Activated B cell treated with CpG ODN at 0.5 μM for 24 hours (primary cell): ENCODE measurements at regions of chr6 and their contacts with region 1.

Region 1: DNA sequence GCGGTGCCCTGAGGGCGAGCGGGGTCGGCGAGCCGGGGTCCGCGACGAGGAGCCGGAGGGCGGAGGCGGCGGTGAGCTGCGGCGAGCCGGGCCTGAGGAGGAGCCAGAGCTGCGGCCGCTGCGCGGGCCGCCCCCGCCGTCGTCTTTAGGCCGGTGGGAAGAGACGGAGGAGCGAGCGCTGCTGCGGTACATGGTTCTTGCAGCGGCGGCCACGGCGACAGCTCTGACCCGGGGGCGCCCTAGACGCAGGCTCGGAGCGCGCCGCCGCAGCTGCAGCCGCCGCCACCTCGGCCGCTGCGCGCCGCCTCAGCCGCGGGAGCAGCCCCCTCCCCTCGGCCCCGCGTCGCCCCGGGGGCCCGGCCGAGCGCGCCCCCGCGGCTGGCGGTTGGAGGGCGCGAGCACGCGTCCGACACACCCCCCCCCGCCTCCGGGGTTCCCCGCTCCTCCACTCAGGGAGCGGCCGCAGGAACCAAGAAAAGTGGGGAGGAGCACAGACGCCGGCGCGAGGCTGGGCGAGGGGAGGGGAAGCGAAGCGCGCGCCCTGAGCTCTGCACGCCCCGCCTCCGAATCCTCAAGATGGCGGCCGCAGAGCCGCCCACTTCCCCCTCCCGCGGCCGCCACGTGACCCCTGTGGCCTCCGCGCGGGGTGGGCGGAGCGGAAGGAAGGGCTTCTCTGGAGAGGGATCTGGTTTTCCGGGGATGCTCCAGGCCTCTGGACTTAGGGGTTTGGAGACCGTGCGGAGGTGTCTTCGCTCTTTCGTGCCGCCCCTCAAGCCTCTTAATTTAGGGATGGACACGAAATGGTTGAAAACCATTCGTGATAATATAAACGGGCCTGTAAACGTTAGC is at the start of gene ZNF318:
- DNase-seq: peak; percentile 92
- ATAC-seq: peak; percentile 90
- H3K4me3 Mint-ChIP-seq: peak within 1 kb of the TSS; percentile 95
- H3K27ac Mint-ChIP-seq: peak within 1 kb of the TSS; percentile 94
- H3K4me1 Mint-ChIP-seq: peaks cover 79% of the 10 kb centered on the region
- H3K27me3 Mint-ChIP-seq: no peaks in the 10 kb centered on the region
- CTCF ChIP-seq: no peak
- total RNA-seq, gene ZNF318: 135 and 159 TPM in 2 replicates

Region 2: GRCh38 chr6:42984001-42984923 is 385.1 kb before region 1 on chr6 and contains the start of gene PPP2R5D:
- CTCF ChIA-PET with region 1: no interaction called
- POLR2A ChIA-PET with region 1: interaction called, 3 read pairs
- intact Hi-C with region 1: loop called (anchors 2 kb)
- DNase-seq: peak; percentile 88
- ATAC-seq: peak; percentile 95
- H3K4me3 Mint-ChIP-seq: peak within 1 kb of the TSS; percentile 85
- H3K27ac Mint-ChIP-seq: peak within 1 kb of the TSS; percentile 88
- H3K4me1 Mint-ChIP-seq: peaks cover 44% of the 10 kb centered on the region
- H3K27me3 Mint-ChIP-seq: no peaks in the 10 kb centered on the region
- CTCF ChIP-seq: no peak
- total RNA-seq, gene PPP2R5D: 26.7 and 26.8 TPM in 2 replicates

Region 3: GRCh38 chr6:43328528-43328927 is 40.9 kb before region 1 on chr6:
- CTCF ChIA-PET with region 1: interaction called, 4 read pairs
- POLR2A ChIA-PET with region 1: no interaction called
- intact Hi-C with region 1: loop called (anchors 2 kb)
- DNase-seq: no peak
- ATAC-seq: no peak
- H3K4me3 Mint-ChIP-seq: no peak overlapping the region
- H3K27ac Mint-ChIP-seq: peak overlapping the region; percentile 31
- H3K4me1 Mint-ChIP-seq: peaks cover 32% of the 10 kb centered on the region
- H3K27me3 Mint-ChIP-seq: no peaks in the 10 kb centered on the region
- CTCF ChIP-seq: no peak

Region 4: GRCh38 chr6:43355862-43356590 is 13.4 kb before region 1 on chr6:
- CTCF ChIA-PET with region 1: interaction called, 4 read pairs
- POLR2A ChIA-PET with region 1: interaction called, 7 read pairs
- intact Hi-C with region 1: loop called (anchors 2 kb)
- DNase-seq: no peak
- ATAC-seq: peak; percentile 65
- H3K4me3 Mint-ChIP-seq: no peak overlapping the region
- H3K27ac Mint-ChIP-seq: no peak overlapping the region
- H3K4me1 Mint-ChIP-seq: peaks cover 28% of the 10 kb centered on the region
- H3K27me3 Mint-ChIP-seq: no peaks in the 10 kb centered on the region
- CTCF ChIP-seq: no peak

Region 5: DNA sequence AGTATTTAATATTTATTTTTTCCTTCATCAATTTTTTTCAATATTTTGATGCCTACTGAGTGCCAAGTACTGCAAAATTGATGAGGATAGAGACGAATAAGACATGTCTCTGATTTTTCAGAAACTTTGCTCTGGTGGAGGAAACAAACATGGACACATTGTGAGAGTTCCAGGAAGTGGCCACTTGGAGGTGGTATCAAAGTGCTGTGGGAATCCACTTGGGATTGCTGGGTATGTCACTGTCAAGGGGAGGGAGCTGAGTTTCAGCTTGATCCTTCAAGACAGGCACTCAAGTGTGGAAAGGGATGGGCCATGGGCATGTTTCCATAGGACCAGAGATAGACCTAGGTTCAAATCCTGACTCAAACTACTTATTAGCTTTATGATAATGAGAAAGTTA is 33.4 kb after region 1 on chr6:
- CTCF ChIA-PET with region 1: interaction called, 7 read pairs
- POLR2A ChIA-PET with region 1: interaction called, 9 read pairs
- intact Hi-C with region 1: loop called (anchors 1 kb)
- DNase-seq: no peak
- ATAC-seq: no peak
- H3K4me3 Mint-ChIP-seq: no peak overlapping the region
- H3K27ac Mint-ChIP-seq: no peak overlapping the region
- H3K4me1 Mint-ChIP-seq: peaks cover 4% of the 10 kb centered on the region
- H3K27me3 Mint-ChIP-seq: peaks cover 23% of the 10 kb centered on the region
- CTCF ChIP-seq: no peak

Region 6: GRCh38 chr6:43454696-43455530 is 85.5 kb after region 1 on chr6:
- CTCF ChIA-PET with region 1: no interaction called
- POLR2A ChIA-PET with region 1: interaction called, 3 read pairs
- intact Hi-C with region 1: loop called (anchors 10 kb)
- DNase-seq: peak; percentile 72
- ATAC-seq: peak; percentile 49
- H3K4me3 Mint-ChIP-seq: peak overlapping the region; percentile 85
- H3K27ac Mint-ChIP-seq: no peak overlapping the region
- H3K4me1 Mint-ChIP-seq: peaks cover 16% of the 10 kb centered on the region
- H3K27me3 Mint-ChIP-seq: no peaks in the 10 kb centered on the region
- CTCF ChIP-seq: no peak

Region 7: GRCh38 chr6:43506667-43507471 is 137.5 kb after region 1 on chr6:
- CTCF ChIA-PET with region 1: no interaction called
- POLR2A ChIA-PET with region 1: no interaction called
- intact Hi-C with region 1: loop called (anchors 5 kb)
- DNase-seq: peak; percentile 67
- ATAC-seq: peak; percentile 60
- H3K4me3 Mint-ChIP-seq: no peak overlapping the region
- H3K27ac Mint-ChIP-seq: no peak overlapping the region
- H3K4me1 Mint-ChIP-seq: peaks cover 19% of the 10 kb centered on the region
- H3K27me3 Mint-ChIP-seq: peaks cover 9% of the 10 kb centered on the region
- CTCF ChIP-seq: peak; percentile 53

Region 8: GRCh38 chr6:44002593-44003344 is 633.4 kb after region 1 on chr6:
- CTCF ChIA-PET with region 1: no interaction called
- POLR2A ChIA-PET with region 1: no interaction called
- intact Hi-C with region 1: no loop called
- DNase-seq: peak; percentile 49
- ATAC-seq: peak; percentile 61
- H3K4me3 Mint-ChIP-seq: peak overlapping the region; percentile 76
- H3K27ac Mint-ChIP-seq: no peak overlapping the region
- H3K4me1 Mint-ChIP-seq: peaks cover 20% of the 10 kb centered on the region
- H3K27me3 Mint-ChIP-seq: peaks cover 49% of the 10 kb centered on the region
- CTCF ChIP-seq: no peak

Region 9: GRCh38 chr6:45075246-45075645 is 1705.8 kb after region 1 on chr6:
- CTCF ChIA-PET with region 1: no interaction called
- POLR2A ChIA-PET with region 1: no interaction called
- intact Hi-C with region 1: no loop called
- DNase-seq: no peak
- ATAC-seq: no peak
- H3K4me3 Mint-ChIP-seq: no peak overlapping the region
- H3K27ac Mint-ChIP-seq: no peak overlapping the region
- H3K4me1 Mint-ChIP-seq: peaks cover 2% of the 10 kb centered on the region
- H3K27me3 Mint-ChIP-seq: no peaks in the 10 kb centered on the region
- CTCF ChIP-seq: no peak